ENCODE measurements at regions of chr16 and their contacts with region 1.

Region 1: GRCh38 chr16:75251280-75252048 is at the start of gene BCAR1:
- DNase-seq: peak; percentile 92 to 97 (median 96)
- ATAC-seq: peak; percentile 76 to 84
- H3K4me3 ChIP-seq: peak within 1 kb of the TSS; percentile 84
- H3K27ac ChIP-seq: peak within 1 kb of the TSS; percentile 83
- H3K4me1 ChIP-seq: peaks cover 53% of the 10 kb centered on the region
- H3K27me3 ChIP-seq: no peaks in the 10 kb centered on the region
- total RNA-seq, gene BCAR1: 58.1 to 68.8 (median 68.0) TPM

Region 2: DNA sequence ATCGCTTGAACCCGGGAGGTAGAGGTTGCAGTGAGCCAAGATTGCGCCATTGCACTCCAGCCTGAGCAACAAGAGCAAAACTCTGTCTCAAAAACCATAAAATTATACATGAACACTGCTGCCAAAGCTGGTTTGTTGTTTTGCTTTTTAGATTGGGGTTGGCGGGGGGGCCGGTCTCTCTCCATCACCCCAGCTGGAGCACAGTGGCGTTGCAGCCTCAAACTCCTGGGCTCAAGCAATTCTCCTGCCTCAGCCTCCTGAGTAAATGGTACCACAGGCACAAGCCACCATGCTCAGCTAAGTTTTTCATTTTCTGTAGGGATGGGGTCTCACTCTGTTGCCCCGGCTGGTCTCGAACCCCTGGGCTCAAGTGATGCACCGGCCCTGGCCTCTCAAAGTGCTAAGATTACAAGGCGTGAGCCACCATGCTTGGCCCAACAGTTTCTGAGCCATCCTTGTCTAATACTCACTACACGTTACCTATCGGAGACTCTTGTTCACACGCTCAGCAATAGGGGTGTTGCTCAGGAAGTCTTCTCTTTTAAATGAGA is 278.2 kb before region 1 on chr16:
- intact Hi-C with region 1: no loop called
- DNase-seq: no peak
- ATAC-seq: no peak
- H3K4me3 ChIP-seq: no peak overlapping the region
- H3K27ac ChIP-seq: no peak overlapping the region
- H3K4me1 ChIP-seq: peaks cover 2% of the 10 kb centered on the region
- H3K27me3 ChIP-seq: no peaks in the 10 kb centered on the region

Region 3: GRCh38 chr16:75175074-75175473 is 76.4 kb before region 1 on chr16:
- intact Hi-C with region 1: no loop called
- DNase-seq: no peak
- ATAC-seq: no peak
- H3K4me3 ChIP-seq: no peak overlapping the region
- H3K27ac ChIP-seq: no peak overlapping the region
- H3K4me1 ChIP-seq: no peaks in the 10 kb centered on the region
- H3K27me3 ChIP-seq: no peaks in the 10 kb centered on the region

Region 4: GRCh38 chr16:75188832-75189510 is 62.5 kb before region 1 on chr16:
- intact Hi-C with region 1: no loop called
- DNase-seq: no peak
- ATAC-seq: no peak
- H3K4me3 ChIP-seq: no peak overlapping the region
- H3K27ac ChIP-seq: no peak overlapping the region
- H3K4me1 ChIP-seq: no peaks in the 10 kb centered on the region
- H3K27me3 ChIP-seq: no peaks in the 10 kb centered on the region

Region 5: DNA sequence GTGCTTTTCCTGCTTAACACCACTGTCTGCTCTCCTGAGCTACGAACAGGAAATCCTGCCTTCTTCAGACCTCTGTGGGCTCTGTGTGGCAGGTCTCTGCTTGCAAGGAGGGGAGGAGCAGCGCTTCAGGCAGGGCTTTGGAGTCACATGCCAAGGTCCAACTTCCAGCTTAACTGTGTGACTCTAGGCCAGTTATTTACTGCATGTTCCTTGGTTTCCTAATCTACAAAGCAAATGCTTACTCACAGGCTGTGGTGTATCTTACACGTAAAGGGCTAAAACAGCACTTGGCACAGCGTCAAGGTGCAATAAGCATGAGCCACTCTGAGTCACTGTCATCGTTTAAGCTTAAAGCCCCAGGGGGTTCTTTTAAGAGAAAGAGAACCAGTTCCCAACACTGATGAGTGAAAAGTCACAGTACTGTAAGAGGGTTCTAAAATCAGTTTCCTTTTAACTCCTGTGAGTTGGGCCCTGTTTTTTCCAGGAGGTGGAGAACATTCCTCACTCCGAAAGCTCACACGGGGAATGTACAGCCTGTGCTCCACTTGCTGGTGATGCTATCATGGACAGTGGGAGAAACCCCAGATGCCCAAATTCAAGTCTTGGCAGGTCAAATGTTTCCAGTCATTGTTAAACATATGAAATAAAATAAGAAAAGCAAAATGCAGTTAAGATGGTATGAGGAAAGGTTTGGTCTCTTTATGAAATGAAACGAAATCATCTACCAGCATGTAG is 54.1 kb after region 1 on chr16:
- intact Hi-C with region 1: loop called in 2 of 4 experiments (anchors 10 kb)
- DNase-seq: peak; percentile 70 to 87 (median 77)
- ATAC-seq: peak; percentile 93 to 94
- H3K4me3 ChIP-seq: no peak overlapping the region
- H3K27ac ChIP-seq: peak overlapping the region; percentile 98
- H3K4me1 ChIP-seq: peaks cover 12% of the 10 kb centered on the region
- H3K27me3 ChIP-seq: no peaks in the 10 kb centered on the region

Measured in right cardiac atrium (tissue), 5 donors.